GM10248 (cell line): ENCODE measurements at regions of chr3 and their contacts with region 1.

Region 1: DNA sequence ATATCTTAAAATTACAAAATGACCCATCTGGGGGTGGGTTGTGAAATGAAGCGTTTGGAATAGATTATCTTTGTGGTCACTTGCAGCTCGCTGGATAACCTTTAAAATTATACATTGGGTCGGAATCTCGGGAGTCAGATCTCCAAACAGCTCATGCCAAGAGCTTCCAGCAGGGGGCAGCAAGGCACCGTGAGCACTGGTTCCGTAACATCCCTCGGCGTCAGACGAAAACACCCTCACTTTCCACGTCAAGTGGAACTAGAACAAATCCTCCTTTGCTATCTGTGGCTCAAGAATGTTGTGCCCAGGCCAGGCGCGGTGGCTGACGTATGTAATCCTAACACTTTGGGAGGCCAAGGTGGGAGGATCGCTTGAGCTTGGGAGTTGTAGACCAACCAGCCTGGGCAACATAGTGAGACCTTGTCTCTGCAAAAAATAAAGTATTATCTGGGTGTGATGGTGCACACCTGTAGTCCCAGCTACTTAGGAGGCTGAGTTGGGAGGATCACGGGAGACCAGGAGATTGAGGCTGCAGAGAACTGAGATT is 31.1 kb downstream of the UMPS start:
- DNase-seq: peak; percentile 81
- CTCF ChIP-seq: peak; percentile 89

Region 2: GRCh38 chr3:124730129-124730940 is 31.0 kb before region 1 on chr3 and contains the start of gene UMPS:
- CTCF ChIA-PET with region 1: interaction called, 12 read pairs
- POLR2A ChIA-PET with region 1: no interaction called
- DNase-seq: peak; percentile 93
- CTCF ChIP-seq: no peak

Region 3: DNA sequence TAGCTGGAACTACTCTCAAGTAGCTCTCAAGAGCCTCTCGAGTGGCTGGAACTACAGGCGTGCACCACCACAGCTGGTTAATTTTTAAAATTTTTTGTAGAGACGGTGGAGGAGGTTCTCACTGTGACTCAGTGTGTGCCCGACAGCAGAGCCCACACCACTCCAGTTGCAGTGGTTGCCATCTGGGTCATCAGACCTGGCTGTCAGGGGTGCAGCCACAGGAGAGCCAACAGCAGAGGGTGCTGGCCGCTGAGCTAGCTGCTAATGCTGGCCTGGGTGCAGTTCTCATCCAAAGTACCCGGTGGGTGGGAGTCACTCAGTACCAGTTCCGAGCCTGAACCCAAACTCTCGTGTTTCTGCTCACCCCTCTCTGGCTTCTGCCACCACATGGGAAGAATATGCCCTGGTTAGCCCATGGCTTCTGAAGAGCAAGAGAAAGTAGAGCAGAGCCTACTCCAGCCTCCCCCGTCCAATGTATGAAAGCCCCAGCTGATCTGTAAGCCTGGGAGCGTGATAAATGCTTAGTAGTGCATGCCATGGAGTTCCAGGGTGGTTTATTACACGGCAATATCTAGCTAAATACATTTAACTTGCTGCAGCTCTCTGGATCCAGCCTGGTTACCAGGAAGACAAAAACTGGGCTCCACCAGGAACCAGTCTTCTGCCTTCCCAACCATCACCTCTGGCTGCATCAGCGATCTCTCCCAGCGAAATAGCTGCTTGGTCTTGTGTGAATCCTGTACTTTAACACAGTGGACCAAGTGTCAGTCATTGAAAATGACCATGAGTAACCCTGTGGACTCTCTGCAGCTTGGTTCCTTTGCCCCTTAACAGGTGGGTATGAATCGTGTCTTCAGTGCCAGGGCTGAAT is 14.0 kb before region 1 on chr3:
- CTCF ChIA-PET with region 1: interaction called, 16 read pairs
- POLR2A ChIA-PET with region 1: no interaction called
- DNase-seq: no peak
- CTCF ChIP-seq: no peak

Region 4: GRCh38 chr3:124786441-124787241 is 25.3 kb after region 1 on chr3:
- CTCF ChIA-PET with region 1: interaction called, 34 read pairs
- POLR2A ChIA-PET with region 1: no interaction called
- DNase-seq: no peak
- CTCF ChIP-seq: no peak

Region 5: DNA sequence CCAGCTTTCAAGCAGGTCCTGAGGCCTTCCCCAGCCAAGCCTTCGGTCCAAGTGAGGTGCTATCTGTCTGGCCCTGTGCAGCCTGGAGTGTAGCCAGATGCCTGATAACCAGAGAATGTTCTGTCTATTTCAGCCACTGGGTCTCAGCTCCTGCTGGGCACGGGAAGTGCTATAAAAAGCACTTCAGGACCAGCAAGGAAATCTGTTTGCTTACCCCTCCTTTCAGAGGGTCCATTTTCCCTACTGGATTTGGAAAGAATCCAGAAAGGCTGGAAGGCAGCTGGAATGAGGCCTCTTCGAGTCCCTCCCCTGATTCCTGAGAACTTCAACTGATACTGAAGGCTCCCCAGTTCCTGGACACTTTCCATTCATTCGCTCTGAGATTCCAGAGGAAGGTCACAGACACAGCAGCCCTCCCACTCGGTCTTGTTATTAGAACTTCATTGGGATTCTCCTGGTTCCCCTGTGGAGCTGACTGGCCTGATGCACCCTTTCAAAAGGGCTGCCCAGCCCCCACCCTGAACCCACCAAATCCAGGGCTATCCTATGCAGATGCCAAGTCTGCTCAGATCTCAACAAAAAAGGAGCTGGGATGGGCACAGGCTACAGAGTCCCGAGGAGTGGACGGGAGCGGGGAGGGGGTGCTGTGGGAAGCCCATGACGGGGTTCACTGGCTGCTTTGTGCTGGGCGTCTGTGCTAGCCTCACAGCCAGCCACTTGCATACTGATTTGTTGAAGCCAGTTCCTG is 39.4 kb after region 1 on chr3:
- CTCF ChIA-PET with region 1: no interaction called
- POLR2A ChIA-PET with region 1: no interaction called
- DNase-seq: no peak
- CTCF ChIP-seq: no peak

Region 6: GRCh38 chr3:125137352-125138033 is 376.2 kb after region 1 on chr3:
- CTCF ChIA-PET with region 1: no interaction called
- POLR2A ChIA-PET with region 1: no interaction called
- DNase-seq: no peak
- CTCF ChIP-seq: no peak

Region 7: GRCh38 chr3:125585595-125586223 is 824.4 kb after region 1 on chr3:
- CTCF ChIA-PET with region 1: interaction called, 50 read pairs
- POLR2A ChIA-PET with region 1: no interaction called
- DNase-seq: peak; percentile 53
- CTCF ChIP-seq: peak; percentile 83